ENCODE measurements at regions of chr16 and their contacts with region 1.

Region 1: DNA sequence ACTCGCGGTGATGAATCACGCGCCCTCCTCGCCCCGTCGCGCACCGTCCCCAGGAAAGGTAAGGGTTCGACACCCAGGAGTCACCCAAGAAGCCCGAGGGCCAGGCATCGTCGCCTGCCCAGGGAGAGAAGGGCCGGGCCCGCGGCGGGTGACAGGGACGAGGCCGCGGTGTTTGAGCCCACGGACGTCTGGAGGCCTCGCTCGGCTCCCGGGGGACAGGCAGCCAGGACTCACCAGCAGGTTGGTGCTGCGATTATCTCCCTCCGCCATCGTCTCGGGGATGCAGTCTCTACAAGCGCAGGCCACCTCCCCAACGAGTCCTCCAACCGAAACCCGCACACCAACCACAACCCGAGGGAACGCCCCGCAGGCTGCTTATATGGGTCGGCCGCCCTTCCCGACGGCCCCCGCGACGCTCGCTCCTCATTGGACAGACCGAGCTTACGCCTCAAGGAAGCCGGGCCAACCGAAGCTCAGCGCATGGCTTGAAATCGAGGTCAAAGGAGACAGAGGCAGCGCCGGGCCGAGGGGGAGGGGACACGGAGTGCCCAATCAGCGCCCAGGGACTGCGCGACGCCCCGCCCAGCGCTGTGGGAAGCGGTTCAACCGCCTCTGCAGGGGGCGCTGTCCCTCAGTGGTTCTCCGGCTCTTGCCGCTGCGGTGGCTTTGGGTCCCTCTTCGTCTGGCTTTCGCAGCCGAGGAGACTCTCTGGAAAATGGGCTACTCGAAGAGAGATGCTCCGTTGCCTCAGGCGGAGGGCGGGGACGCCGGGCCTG is at the start of gene ARL6IP1:
- DNase-seq: peak; percentile 95 to 100
- H3K4me3 ChIP-seq: peak within 1 kb of the TSS; percentile 63 to 93 (median 91)
- H3K27ac ChIP-seq: peak within 1 kb of the TSS; percentile 93
- H3K4me1 ChIP-seq: peaks cover 3 to 11% (median 5%) of the 10 kb centered on the region in 4 experiments; a peak in 5 of 7 replicates
- H3K27me3 ChIP-seq: no peaks in the 10 kb centered on the region
- CTCF ChIP-seq: peak; percentile 54 to 80 (median 65)
- EP300 ChIP-seq: peak in 1 of 2 experiments; percentile 47; a peak in 1 of 3 replicates
- POLR2A ChIP-seq: peak; percentile 100
- RAD21 ChIP-seq: peak; percentile 22 to 32; a peak in 2 of 4 replicates
- total RNA-seq, gene ARL6IP1: 154 and 162 TPM in 2 replicates

Region 2: GRCh38 chr16:18789850-18790724 is 11.3 kb before region 1 on chr16 and contains the start of gene RPS15A:
- CTCF ChIA-PET with region 1: interaction called, 9 read pairs
- POLR2A ChIA-PET with region 1: interaction called, 503 read pairs
- DNase-seq: peak; percentile 88 to 94
- H3K4me3 ChIP-seq: peak within 1 kb of the TSS; percentile 92 to 99 (median 97)
- H3K27ac ChIP-seq: peak within 1 kb of the TSS; percentile 97
- H3K4me1 ChIP-seq: peaks cover 0 to 5% (median 4%) of the 10 kb centered on the region in 4 experiments; a peak in 6 of 7 replicates
- H3K27me3 ChIP-seq: no peaks in the 10 kb centered on the region
- CTCF ChIP-seq: no peak
- EP300 ChIP-seq: no peak
- POLR2A ChIP-seq: peak; percentile 97
- RAD21 ChIP-seq: no peak
- total RNA-seq, gene RPS15A: 1,784 TPM in 2 replicates

Region 3: DNA sequence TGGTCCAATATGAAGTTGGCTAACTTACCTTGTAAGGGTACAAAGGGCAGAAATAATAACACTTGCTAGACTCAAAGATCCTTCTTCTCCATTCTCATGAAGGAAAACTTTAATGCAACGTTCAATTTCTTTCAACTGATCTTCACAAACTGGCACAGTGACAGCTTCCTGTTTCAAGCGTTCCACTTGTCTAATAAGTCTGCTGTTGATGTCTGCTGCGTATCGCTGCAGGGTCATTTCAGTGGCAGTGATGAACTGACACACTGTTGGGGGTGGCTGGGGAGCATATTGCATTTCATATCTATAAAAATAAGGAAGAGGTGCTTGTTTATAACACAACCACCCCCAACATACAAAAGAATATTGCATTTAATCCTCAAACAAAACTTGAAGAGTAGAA is 33.5 kb after region 1 on chr16:
- CTCF ChIA-PET with region 1: interaction called, 6 read pairs
- POLR2A ChIA-PET with region 1: interaction called, 20 read pairs
- DNase-seq: no peak
- H3K4me3 ChIP-seq: no peak overlapping the region
- H3K27ac ChIP-seq: no peak overlapping the region
- H3K4me1 ChIP-seq: no peaks in the 10 kb centered on the region
- H3K27me3 ChIP-seq: no peaks in the 10 kb centered on the region
- CTCF ChIP-seq: no peak
- EP300 ChIP-seq: no peak
- POLR2A ChIP-seq: no peak
- RAD21 ChIP-seq: no peak

Region 4: GRCh38 chr16:18852647-18853046 is 51.3 kb after region 1 on chr16:
- CTCF ChIA-PET with region 1: no interaction called
- POLR2A ChIA-PET with region 1: interaction called, 13 read pairs
- DNase-seq: no peak
- H3K4me3 ChIP-seq: no peak overlapping the region
- H3K27ac ChIP-seq: no peak overlapping the region
- H3K4me1 ChIP-seq: no peaks in the 10 kb centered on the region
- H3K27me3 ChIP-seq: no peaks in the 10 kb centered on the region
- CTCF ChIP-seq: no peak
- EP300 ChIP-seq: no peak
- POLR2A ChIP-seq: no peak
- RAD21 ChIP-seq: no peak

Measured in H1 (cell line).